OCI-LY7 (cell line): ENCODE measurements at regions of chr2 and their contacts with region 1.

Region 1: GRCh38 chr2:27291865-27292264 is 9.6 kb downstream of the TRIM54 start:
- DNase-seq: peak; percentile 85
- H3K4me3 ChIP-seq: peak overlapping the region; percentile 39
- H3K27ac ChIP-seq: peak overlapping the region; percentile 99
- H3K4me1 ChIP-seq: peaks cover 75% of the 10 kb centered on the region
- CTCF ChIP-seq: peak; percentile 90

Region 2: GRCh38 chr2:26846328-26847306 is 445.2 kb before region 1 on chr2:
- CTCF ChIA-PET with region 1: no interaction called
- POLR2A ChIA-PET with region 1: no interaction called
- intact Hi-C with region 1: loop called (anchors 5 kb)
- DNase-seq: peak; percentile 74
- H3K4me3 ChIP-seq: no peak overlapping the region
- H3K27ac ChIP-seq: no peak overlapping the region
- H3K4me1 ChIP-seq: no peaks in the 10 kb centered on the region
- CTCF ChIP-seq: peak; percentile 91

Region 3: DNA sequence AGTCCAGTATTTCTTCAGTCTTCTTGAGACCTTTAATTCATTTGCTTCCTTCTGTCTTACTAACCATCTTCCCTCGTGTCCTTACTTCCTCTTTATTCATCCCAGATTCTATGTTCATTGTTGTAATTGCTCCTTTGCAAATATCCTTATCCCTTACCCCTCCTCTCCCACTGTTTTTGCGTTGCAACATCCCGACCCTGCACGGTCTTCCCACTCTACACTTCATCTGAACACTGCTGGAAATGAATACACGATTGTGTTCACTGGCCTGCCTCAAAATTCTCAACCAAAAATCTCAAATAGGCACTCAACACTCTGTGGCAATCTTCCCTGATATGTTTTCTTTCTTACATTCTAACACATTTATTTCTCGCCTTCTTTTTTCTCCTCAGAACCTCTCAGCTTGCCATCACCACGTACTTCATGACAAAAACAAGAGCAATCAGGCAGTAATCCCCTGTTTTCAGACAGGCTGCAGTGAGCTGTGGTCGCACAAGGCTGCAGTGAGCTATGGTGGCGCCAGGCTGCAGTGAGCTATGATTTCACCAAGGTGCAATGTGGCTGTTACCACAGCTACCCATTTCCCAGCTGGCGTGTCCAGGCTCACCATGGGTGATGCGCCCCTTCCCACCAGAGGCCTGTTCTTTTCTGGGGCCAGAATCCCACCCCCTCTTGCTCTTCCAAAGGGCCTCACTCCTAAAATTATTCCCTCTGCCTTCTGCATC is 117.4 kb before region 1 on chr2:
- CTCF ChIA-PET with region 1: no interaction called
- POLR2A ChIA-PET with region 1: interaction called, 3 read pairs
- intact Hi-C with region 1: loop called (anchors 5 kb)
- DNase-seq: peak; percentile 53
- H3K4me3 ChIP-seq: no peak overlapping the region
- H3K27ac ChIP-seq: peak overlapping the region; percentile 18
- H3K4me1 ChIP-seq: peaks cover 86% of the 10 kb centered on the region
- CTCF ChIP-seq: peak; percentile 41; the same call in 1 of the 2 replicates

Region 4: DNA sequence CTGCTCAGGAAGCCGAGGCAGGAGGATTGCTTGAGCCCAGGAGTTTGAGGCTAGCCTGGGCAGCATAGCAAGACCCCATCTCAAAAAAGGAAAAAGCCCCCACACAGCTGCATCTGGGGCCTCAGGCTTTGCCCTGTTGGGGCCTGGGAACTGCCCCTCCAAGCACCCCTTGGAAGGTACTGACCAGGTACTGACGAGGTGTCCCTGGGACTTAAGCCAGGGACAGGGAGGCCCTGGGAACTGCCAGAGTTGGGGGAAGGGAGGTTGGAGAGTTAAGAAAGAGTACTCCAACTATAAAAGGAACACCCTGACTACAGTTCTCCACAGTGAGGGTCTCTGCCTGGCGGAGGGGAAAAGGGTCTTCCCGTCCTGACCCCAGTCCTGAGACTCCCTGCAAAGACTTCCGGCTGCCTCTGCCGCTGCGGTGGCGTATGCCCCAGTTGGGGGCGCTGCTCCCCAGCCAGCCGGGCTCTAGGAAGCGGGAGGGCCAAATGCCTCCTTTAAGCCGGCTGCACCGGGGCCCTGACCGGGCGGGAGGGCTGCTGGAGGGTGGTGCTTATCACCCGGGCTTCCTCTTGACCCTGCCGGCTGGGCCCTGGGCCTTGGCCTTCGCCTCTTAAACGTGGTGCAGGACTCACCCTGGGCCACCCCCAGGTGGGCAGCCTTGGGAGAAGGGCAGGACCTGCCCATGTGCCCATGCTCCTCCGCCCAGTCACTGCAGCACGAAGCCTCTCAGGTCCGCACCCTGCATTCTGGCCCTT is 41.8 kb before region 1 on chr2:
- CTCF ChIA-PET with region 1: interaction called, 37 read pairs
- POLR2A ChIA-PET with region 1: interaction called, 21 read pairs
- intact Hi-C with region 1: loop called (anchors 1 kb)
- DNase-seq: peak; percentile 91
- H3K4me3 ChIP-seq: peak overlapping the region; percentile 58
- H3K27ac ChIP-seq: peak overlapping the region; percentile 92
- H3K4me1 ChIP-seq: peaks cover 43% of the 10 kb centered on the region
- CTCF ChIP-seq: peak; percentile 97

Region 5: DNA sequence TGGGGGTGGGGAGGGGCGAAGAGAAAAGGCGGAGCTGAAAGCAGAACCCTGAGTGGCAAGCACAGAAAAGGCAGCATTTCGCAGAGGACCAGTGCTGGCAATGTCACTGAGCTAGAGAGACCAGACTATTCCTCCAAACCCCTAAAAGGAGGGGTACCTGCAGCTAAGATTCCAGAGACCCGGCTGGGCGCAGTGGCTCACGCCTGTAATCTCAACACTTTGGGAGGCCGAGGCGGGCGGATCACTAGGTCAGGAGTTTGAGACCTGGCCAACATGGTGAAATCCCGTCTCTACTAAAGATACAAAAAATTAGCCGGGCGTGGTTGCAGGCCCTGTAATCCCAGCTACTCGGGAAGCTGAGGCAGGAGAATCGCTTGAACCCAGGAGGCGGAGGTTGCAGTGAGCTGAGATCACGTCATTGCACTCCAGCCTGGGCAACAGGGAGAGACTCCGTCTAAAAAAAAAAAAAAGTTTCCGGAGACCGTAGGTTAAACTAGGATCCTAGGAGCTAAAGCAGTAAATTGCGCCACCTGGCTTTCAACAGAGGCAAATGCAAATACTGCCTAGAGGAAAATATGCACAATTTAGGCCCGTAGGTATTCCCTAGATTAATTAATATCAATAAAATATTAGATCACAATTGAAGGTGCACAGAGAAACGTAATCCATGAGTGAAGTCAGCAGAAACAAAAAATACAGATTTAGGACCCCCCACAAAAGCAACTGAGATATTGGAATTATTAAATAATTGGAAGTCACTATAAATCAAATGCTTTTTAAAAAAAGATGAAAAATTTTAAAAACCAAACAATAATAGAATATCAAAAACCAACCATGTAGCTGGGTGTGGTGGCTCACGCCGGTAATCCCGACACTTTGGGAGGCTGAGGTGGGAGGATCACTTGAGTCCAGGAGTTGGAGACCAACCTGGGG is 11.5 kb after region 1 on chr2:
- CTCF ChIA-PET with region 1: interaction called, 18 read pairs
- POLR2A ChIA-PET with region 1: interaction called, 46 read pairs
- intact Hi-C with region 1: no loop called
- DNase-seq: peak; percentile 90
- H3K4me3 ChIP-seq: peak overlapping the region; percentile 61
- H3K27ac ChIP-seq: peak overlapping the region; percentile 43
- H3K4me1 ChIP-seq: peaks cover 14% of the 10 kb centered on the region
- CTCF ChIP-seq: peak; percentile 92